ENCODE measurements at regions of chr17 and their contacts with region 1.

Region 1: DNA sequence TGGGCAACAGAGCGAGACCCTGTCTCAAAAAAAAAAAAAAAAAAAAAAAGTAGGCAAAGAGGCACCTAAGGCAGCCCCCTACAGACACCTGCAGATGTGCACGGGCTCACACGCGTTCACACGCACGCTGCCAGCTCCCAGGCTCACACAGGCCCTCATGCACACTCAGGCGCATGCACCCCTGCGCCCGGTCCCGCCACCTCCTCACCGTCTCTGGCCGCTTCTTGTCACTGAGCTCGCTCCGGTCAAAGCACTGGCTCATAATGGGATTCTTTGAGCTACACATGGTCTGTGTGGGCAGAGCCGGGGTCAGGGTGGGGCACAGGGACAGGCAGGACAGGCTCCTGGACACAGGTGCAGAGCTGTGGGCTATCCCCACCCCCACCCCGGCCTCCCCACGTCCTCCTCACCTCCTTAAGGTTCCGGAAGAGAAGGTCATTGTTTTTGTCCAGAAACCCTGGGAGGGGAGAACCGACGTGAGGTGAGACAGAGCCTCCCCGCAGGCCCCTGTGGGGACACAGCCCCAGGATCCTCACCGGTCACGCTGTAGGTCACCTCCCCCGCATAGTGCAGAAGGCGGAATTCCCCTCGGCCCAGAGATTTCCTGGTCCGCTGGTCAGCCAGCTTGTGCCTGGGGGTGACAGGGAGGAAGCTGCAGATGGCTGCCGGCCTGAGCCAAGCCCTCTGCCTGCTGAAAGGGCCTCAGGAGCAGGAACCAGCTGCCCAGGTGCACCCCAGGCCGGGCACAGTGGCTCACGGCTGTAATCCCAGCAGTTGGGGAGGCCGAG is 17.9 kb downstream of the MYO1C start:
- DNase-seq: peak; percentile 75
- ATAC-seq: peak; percentile 56
- H3K4me3 ChIP-seq: peak overlapping the region in 1 of 5 experiments; percentile 1
- H3K4me3 Mint-ChIP-seq: peak overlapping the region; percentile 82
- H3K27ac ChIP-seq: peak overlapping the region; percentile 10 to 81
- H3K27ac Mint-ChIP-seq: peak overlapping the region; percentile 81
- H3K4me1 ChIP-seq: peaks cover 36 to 66% of the 10 kb centered on the region in 2 donors
- H3K4me1 Mint-ChIP-seq: peaks cover 42% of the 10 kb centered on the region
- H3K27me3 ChIP-seq: no peaks in the 10 kb centered on the region
- H3K27me3 Mint-ChIP-seq: no peaks in the 10 kb centered on the region
- CTCF ChIP-seq: no peak

Region 2: GRCh38 chr17:1294157-1294717 is 180.4 kb before region 1 on chr17:
- CTCF ChIA-PET with region 1: no interaction called
- POLR2A ChIA-PET with region 1: no interaction called
- intact Hi-C with region 1: no loop called
- DNase-seq: peak; percentile 59
- ATAC-seq: peak; percentile 36
- H3K4me3 ChIP-seq: no peak overlapping the region
- H3K4me3 Mint-ChIP-seq: peak overlapping the region; percentile 23
- H3K27ac ChIP-seq: no peak overlapping the region
- H3K27ac Mint-ChIP-seq: no peak overlapping the region
- H3K4me1 ChIP-seq: peaks cover 23 to 32% of the 10 kb centered on the region in 2 donors
- H3K4me1 Mint-ChIP-seq: peaks cover 20% of the 10 kb centered on the region
- H3K27me3 ChIP-seq: peaks cover 0 to 16% (median 6%) of the 10 kb centered on the region in 4 experiments
- H3K27me3 Mint-ChIP-seq: no peaks in the 10 kb centered on the region
- CTCF ChIP-seq: no peak

Region 3: DNA sequence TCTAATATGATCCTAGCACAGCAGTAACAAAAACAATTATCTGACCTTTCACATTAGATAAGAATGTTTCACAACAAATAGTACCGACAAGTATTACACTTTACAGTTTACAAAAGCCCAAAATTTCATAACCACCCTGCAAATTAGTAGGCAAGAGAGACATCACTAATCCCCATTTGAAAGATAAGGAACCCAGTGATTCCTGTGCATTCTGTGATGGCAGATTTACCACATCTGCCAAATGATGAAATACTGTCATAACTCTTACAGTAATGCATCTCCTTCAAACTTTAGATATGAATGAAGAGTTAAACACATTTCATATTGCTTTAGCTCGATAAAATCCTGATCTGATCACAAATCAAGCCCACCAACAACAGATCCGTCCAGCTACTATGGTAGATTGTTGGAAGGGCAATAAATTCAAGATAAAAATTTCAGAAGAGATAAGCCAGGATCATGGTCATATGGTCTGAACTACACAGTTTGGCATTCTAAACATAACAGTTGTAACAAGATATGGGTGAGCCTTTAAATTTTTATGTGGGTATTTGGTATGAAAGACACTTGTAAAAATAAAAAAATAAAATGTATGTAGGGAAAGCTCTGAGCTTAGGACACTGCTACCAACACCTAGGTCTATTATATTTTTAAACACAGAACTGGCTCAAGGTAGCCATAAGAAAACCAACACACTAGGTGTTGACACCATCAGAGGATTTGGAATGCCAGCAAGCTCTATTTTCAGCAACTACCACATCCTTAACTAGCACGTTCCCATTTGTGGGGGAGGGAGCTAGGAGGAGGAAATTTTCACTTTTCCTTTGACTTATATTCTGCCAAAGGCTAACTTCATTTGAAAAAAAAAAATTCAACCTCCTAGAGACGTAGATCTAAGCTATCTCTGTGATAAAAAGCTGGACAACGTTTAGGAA is 83.9 kb before region 1 on chr17:
- CTCF ChIA-PET with region 1: no interaction called
- POLR2A ChIA-PET with region 1: no interaction called
- intact Hi-C with region 1: no loop called
- DNase-seq: no peak
- ATAC-seq: no peak
- H3K4me3 ChIP-seq: no peak overlapping the region
- H3K4me3 Mint-ChIP-seq: peak overlapping the region; percentile 52
- H3K27ac ChIP-seq: peak overlapping the region in 1 of 2 donors; percentile 62
- H3K27ac Mint-ChIP-seq: no peak overlapping the region
- H3K4me1 ChIP-seq: peaks cover 59 to 61% of the 10 kb centered on the region in 2 donors
- H3K4me1 Mint-ChIP-seq: peaks cover 69% of the 10 kb centered on the region
- H3K27me3 ChIP-seq: no peaks in the 10 kb centered on the region
- H3K27me3 Mint-ChIP-seq: no peaks in the 10 kb centered on the region
- CTCF ChIP-seq: no peak

Region 4: GRCh38 chr17:1422907-1423306 is 51.7 kb before region 1 on chr17:
- CTCF ChIA-PET with region 1: no interaction called
- POLR2A ChIA-PET with region 1: interaction called, 12 read pairs
- intact Hi-C with region 1: no loop called
- DNase-seq: no peak
- ATAC-seq: no peak
- H3K4me3 ChIP-seq: no peak overlapping the region
- H3K4me3 Mint-ChIP-seq: no peak overlapping the region
- H3K27ac ChIP-seq: no peak overlapping the region
- H3K27ac Mint-ChIP-seq: no peak overlapping the region
- H3K4me1 ChIP-seq: no peaks in the 10 kb centered on the region
- H3K4me1 Mint-ChIP-seq: peaks cover 3% of the 10 kb centered on the region
- H3K27me3 ChIP-seq: no peaks in the 10 kb centered on the region
- H3K27me3 Mint-ChIP-seq: no peaks in the 10 kb centered on the region
- CTCF ChIP-seq: no peak

Region 5: DNA sequence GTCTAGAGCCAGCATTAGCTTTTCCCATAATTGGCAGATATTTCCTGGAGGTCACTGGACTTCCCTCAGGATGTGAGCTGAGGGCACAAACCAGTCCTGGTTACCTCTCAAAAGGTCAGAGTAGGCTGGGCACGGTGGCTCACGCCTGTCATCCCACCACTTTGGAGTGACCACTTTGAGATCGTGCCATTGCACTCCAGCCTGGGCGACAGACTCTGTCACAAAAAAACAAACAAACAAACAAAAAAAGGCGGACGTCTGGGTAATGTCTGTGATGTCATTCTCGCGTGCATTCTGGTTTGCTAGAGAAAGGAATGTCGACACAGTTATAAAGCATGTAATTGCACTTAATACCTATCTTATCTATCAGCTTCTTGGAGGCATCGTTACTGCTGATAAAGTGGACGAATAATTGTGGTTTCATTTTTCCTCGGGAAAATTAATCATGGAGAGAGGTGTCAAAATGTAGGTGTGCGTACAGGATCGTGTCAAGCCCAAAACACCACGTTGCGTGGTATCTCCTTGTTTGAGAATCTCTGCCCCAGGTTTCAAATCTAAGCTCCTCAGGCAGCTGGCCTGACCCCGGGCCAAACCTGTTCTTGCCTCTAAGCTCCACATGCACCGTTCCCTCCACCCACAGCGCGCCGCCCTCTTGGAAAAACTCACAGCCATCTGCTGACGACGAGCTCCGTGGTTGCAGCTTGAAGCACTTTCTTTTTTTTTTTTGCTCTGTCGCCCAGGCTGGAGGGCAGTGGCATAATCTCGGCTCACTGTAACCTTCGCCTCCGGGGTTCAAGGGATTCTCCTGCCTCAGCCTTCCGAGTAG is 12.1 kb before region 1 on chr17:
- CTCF ChIA-PET with region 1: interaction called, 6 read pairs
- POLR2A ChIA-PET with region 1: interaction called, 12 read pairs
- intact Hi-C with region 1: loop called (anchors 1 kb)
- DNase-seq: peak; percentile 24
- ATAC-seq: no peak
- H3K4me3 ChIP-seq: peak overlapping the region in 2 of 5 experiments; percentile 4 to 30
- H3K4me3 Mint-ChIP-seq: peak overlapping the region; percentile 76
- H3K27ac ChIP-seq: no peak overlapping the region
- H3K27ac Mint-ChIP-seq: peak overlapping the region; percentile 91
- H3K4me1 ChIP-seq: peaks cover 20 to 37% of the 10 kb centered on the region in 2 donors
- H3K4me1 Mint-ChIP-seq: peaks cover 29% of the 10 kb centered on the region
- H3K27me3 ChIP-seq: peaks cover 0 to 2% (median 0%) of the 10 kb centered on the region in 4 experiments
- H3K27me3 Mint-ChIP-seq: peaks cover 4% of the 10 kb centered on the region
- CTCF ChIP-seq: no peak

Region 6: GRCh38 chr17:1673041-1673785 is 198.6 kb after region 1 on chr17:
- CTCF ChIA-PET with region 1: no interaction called
- POLR2A ChIA-PET with region 1: no interaction called
- intact Hi-C with region 1: no loop called
- DNase-seq: no peak
- ATAC-seq: no peak
- H3K4me3 ChIP-seq: no peak overlapping the region
- H3K4me3 Mint-ChIP-seq: no peak overlapping the region
- H3K27ac ChIP-seq: no peak overlapping the region
- H3K27ac Mint-ChIP-seq: no peak overlapping the region
- H3K4me1 ChIP-seq: no peaks in the 10 kb centered on the region
- H3K4me1 Mint-ChIP-seq: peaks cover 7% of the 10 kb centered on the region
- H3K27me3 ChIP-seq: no peaks in the 10 kb centered on the region
- H3K27me3 Mint-ChIP-seq: no peaks in the 10 kb centered on the region
- CTCF ChIP-seq: no peak

Measured in B cell (primary cell).